ENCODE measurements at regions of chr4 and their contacts with region 1.

Region 1: DNA sequence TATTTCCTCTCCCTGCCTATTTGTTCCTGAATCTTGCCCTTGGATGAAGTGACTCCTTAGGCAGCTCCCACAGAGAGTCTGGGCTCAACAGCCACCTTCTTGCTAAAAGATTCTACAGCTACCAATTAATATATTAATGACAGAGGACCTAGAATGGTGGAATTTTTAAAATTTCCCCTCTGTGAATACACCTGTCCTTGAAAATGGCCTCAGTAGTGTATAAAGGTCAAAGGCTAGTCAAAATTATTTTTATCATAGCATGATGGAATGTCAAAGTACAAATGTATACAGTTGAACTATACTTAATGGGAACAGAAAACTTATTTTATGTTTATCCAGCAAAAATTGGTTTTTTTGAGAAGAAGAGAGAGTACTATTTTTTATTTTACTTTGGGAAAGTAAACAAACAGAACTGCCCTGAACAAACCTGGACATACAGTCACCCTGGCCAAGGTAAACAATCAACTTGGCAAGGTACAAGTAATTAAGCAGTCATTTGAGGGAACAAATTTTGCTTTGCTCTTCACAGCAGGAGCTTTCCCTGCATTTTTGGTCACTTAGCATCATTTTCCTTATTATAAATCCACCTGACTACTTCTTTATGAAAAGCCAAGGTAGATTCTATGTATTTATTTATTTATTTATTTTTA is 250.8 kb downstream of the INPP4B start:
- DNase-seq: no peak
- ATAC-seq: no peak
- H3K4me3 ChIP-seq: no peak overlapping the region
- H3K27ac ChIP-seq: no peak overlapping the region
- H3K4me1 ChIP-seq: peaks cover 0 to 8% (median 0%) of the 10 kb centered on the region in 9 donors
- H3K27me3 ChIP-seq: no peaks in the 10 kb centered on the region
- CTCF ChIP-seq: no peak

Region 2: GRCh38 chr4:142528433-142528832 is 66.9 kb before region 1 on chr4:
- intact Hi-C with region 1: no loop called
- DNase-seq: no peak
- ATAC-seq: no peak
- H3K4me3 ChIP-seq: no peak overlapping the region
- H3K27ac ChIP-seq: no peak overlapping the region
- H3K4me1 ChIP-seq: no peaks in the 10 kb centered on the region
- H3K27me3 ChIP-seq: no peaks in the 10 kb centered on the region
- CTCF ChIP-seq: no peak

Region 3: GRCh38 chr4:142614621-142615317 is 19.4 kb after region 1 on chr4:
- intact Hi-C with region 1: loop called in 1 of 10 experiments (anchors 1 kb)
- DNase-seq: no peak
- ATAC-seq: no peak
- H3K4me3 ChIP-seq: no peak overlapping the region
- H3K27ac ChIP-seq: no peak overlapping the region
- H3K4me1 ChIP-seq: peaks cover 0 to 13% (median 0%) of the 10 kb centered on the region in 9 donors
- H3K27me3 ChIP-seq: no peaks in the 10 kb centered on the region
- CTCF ChIP-seq: no peak

Measured in heart right ventricle (tissue), 16 donors.